Colonic mucosa (tissue), 4 donors: ENCODE measurements at regions of chr9 and their contacts with region 1.

Region 1: DNA sequence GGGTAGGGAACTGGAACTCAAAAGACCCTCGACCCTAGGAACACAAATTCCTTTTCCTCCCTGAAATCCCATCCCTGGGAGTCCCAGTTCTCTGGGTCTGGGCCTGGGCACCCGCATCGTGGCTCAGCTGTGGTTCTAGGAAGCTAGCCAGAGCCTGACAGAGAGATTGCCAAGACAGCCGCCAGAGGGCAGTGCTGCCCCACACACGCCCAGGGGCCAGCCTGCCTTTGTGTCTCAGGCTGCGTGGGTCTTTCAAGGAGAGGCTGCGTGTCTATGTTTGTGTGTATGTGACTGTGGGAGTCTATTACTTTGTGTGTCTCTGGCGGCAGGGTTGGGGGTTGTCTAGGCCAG is 32.0 kb upstream of the TTLL11 start:
- DNase-seq: peak; percentile 83
- H3K4me3 ChIP-seq: no peak overlapping the region
- H3K27ac ChIP-seq: no peak overlapping the region
- H3K4me1 ChIP-seq: no peaks in the 10 kb centered on the region
- H3K27me3 ChIP-seq: peaks cover 12% of the 10 kb centered on the region
- CTCF ChIP-seq: peak; percentile 94

Region 2: DNA sequence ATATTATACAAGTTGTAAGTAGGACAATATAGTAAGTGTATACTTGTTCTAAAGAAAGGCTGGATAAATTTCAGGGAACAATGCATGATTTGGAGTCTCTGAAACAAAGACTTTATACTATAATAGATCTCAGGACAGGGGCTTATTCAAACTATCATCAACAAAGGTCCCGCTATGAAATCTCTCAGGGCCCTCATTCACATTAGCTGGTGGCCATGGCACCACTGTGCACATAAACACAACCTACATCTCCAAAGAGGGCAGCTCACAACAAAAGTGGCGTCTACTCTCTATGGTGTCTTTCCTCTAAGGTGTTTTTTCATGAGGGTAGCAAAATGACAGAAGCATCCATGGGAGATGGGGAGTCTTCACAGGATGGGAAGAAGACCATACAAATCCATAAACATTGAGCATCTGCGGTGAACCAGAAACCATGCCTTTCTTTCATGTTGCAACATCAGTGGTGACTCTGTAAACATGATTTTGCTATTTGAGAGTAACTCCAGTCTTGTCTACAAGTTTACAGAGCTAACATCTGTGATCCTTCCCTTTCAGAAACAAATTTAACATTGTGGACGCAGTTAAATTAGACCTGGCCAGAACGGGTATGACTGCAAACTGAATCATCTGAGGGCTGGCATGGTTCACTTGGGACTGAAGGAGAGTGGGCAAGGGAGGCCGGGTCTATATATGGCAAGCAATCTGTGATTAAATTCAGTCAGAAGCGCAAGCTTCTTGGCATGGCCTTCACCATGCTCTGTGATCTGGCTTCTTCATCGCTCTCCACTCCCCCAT is 37.5 kb before region 1 on chr9:
- intact Hi-C with region 1: no loop called
- DNase-seq: no peak
- H3K4me3 ChIP-seq: no peak overlapping the region
- H3K27ac ChIP-seq: peak overlapping the region; percentile 1
- H3K4me1 ChIP-seq: peaks cover 10% of the 10 kb centered on the region
- H3K27me3 ChIP-seq: no peaks in the 10 kb centered on the region
- CTCF ChIP-seq: no peak

Region 3: GRCh38 chr9:122099271-122099869 is 25.8 kb before region 1 on chr9:
- intact Hi-C with region 1: loop called (anchors 2 kb)
- DNase-seq: peak; percentile 90
- H3K4me3 ChIP-seq: no peak overlapping the region
- H3K27ac ChIP-seq: no peak overlapping the region
- H3K4me1 ChIP-seq: no peaks in the 10 kb centered on the region
- H3K27me3 ChIP-seq: no peaks in the 10 kb centered on the region
- CTCF ChIP-seq: peak; percentile 71

Region 4: GRCh38 chr9:122350638-122351355 is 225.7 kb after region 1 on chr9:
- intact Hi-C with region 1: loop called (anchors 1 kb)
- DNase-seq: peak; percentile 86
- H3K4me3 ChIP-seq: no peak overlapping the region
- H3K27ac ChIP-seq: no peak overlapping the region
- H3K4me1 ChIP-seq: peaks cover 7% of the 10 kb centered on the region
- H3K27me3 ChIP-seq: no peaks in the 10 kb centered on the region
- CTCF ChIP-seq: peak; percentile 94

Region 5: GRCh38 chr9:122453677-122454135 is 328.6 kb after region 1 on chr9:
- intact Hi-C with region 1: loop called (anchors 10 kb)
- DNase-seq: no peak
- H3K4me3 ChIP-seq: no peak overlapping the region
- H3K27ac ChIP-seq: no peak overlapping the region
- H3K4me1 ChIP-seq: no peaks in the 10 kb centered on the region
- H3K27me3 ChIP-seq: no peaks in the 10 kb centered on the region
- CTCF ChIP-seq: no peak

Region 6: GRCh38 chr9:122810306-122810946 is 685.3 kb after region 1 on chr9:
- intact Hi-C with region 1: loop called (anchors 10 kb)
- DNase-seq: peak; percentile 71
- H3K4me3 ChIP-seq: no peak overlapping the region
- H3K27ac ChIP-seq: no peak overlapping the region
- H3K4me1 ChIP-seq: no peaks in the 10 kb centered on the region
- H3K27me3 ChIP-seq: no peaks in the 10 kb centered on the region
- CTCF ChIP-seq: peak; percentile 74